Mammary epithelial cell (primary cell): ENCODE measurements at regions of chr12 and their contacts with region 1.

Region 1: GRCh38 chr12:926641-927040 is 22.9 kb downstream of the RAD52 start:
- DNase-seq: no peak
- H3K4me3 ChIP-seq: no peak overlapping the region
- H3K27ac ChIP-seq: no peak overlapping the region
- H3K4me1 ChIP-seq: no peaks in the 10 kb centered on the region
- H3K27me3 ChIP-seq: no peaks in the 10 kb centered on the region
- CTCF ChIP-seq: no peak

Region 2: GRCh38 chr12:894226-894625 is 32.4 kb before region 1 on chr12:
- CTCF ChIA-PET with region 1: no interaction called
- dilution Hi-C with region 1: loop called (anchors 5 kb)
- in situ Hi-C with region 1: no loop called
- intact Hi-C with region 1: no loop called
- DNase-seq: no peak
- H3K4me3 ChIP-seq: no peak overlapping the region
- H3K27ac ChIP-seq: no peak overlapping the region
- H3K4me1 ChIP-seq: no peaks in the 10 kb centered on the region
- H3K27me3 ChIP-seq: no peaks in the 10 kb centered on the region
- CTCF ChIP-seq: no peak

Region 3: GRCh38 chr12:913919-914708 is 12.5 kb before region 1 on chr12:
- CTCF ChIA-PET with region 1: no interaction called
- dilution Hi-C with region 1: no loop called
- in situ Hi-C with region 1: no loop called
- intact Hi-C with region 1: no loop called
- DNase-seq: peak; percentile 76
- H3K4me3 ChIP-seq: no peak overlapping the region
- H3K27ac ChIP-seq: peak overlapping the region; percentile 27
- H3K4me1 ChIP-seq: no peaks in the 10 kb centered on the region
- H3K27me3 ChIP-seq: no peaks in the 10 kb centered on the region
- CTCF ChIP-seq: no peak

Region 4: DNA sequence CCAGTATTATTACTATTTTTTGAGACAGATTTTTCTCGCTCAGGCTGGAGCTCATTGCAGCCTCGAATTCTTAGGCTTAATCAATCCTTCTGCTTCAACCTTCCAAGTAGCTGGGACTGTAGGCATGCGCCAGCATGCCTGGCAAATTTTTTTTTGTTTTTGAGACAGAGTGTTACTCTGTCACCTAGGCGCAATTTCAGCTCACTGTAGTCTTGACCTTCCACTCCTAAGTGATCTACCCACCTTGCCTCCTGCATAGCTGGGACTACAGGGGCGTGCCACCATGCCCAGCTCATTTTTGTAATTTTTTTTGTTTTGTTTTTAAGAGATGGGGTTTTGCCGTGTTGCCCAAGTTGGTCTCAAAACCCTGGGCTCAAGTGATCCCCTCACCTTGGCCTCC is 79.6 kb after region 1 on chr12:
- CTCF ChIA-PET with region 1: no interaction called
- dilution Hi-C with region 1: loop called (anchors 5 kb)
- in situ Hi-C with region 1: no loop called
- intact Hi-C with region 1: no loop called
- DNase-seq: peak; percentile 35
- H3K4me3 ChIP-seq: no peak overlapping the region
- H3K27ac ChIP-seq: no peak overlapping the region
- H3K4me1 ChIP-seq: peaks cover 7% of the 10 kb centered on the region
- H3K27me3 ChIP-seq: no peaks in the 10 kb centered on the region
- CTCF ChIP-seq: no peak